Endothelial cell of umbilical vein (primary cell): ENCODE measurements at regions of chr5 and their contacts with region 1.

Region 1: DNA sequence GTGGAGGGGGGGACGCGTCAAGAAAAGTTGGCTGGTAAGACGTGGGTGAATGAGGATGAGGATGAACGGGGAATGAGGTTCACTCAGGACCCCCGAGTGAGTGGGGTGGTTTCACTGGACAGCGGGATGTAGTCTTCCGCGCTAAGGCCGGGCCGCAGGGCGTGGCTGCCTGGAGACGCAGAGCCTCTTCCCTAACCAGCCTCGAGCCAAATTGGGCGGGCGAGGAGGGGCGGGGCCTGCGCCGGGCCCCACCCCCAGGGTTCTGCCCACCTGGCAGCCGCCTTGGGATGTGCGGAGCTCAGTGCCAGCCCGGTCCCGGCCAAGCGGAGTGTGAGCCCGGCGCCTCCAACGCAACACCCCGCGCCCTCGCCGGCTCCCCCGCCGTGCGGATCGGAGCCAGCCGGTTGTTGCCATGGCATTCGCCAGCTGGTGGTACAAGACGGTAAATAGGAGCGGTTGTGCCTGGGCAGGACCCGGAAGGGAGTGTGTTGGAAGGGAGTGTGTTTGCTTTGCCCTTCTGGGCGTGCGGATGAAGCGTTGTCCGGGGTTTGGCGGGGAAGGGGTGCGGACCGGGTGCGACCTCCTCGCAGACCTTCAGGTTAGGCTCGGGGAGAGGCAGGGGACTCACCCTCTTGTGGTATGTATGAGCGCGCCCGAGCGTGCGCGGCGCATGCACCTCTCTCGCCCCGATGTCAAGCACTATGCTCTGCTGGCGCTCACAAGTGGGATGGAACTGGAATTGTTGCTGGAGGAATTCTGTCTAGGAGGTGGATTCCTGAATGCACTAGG is 743 bp downstream of the CAST start:
- DNase-seq: peak; percentile 90
- H3K4me3 ChIP-seq: peak overlapping the region; percentile 49 to 86 (median 84)
- H3K27ac ChIP-seq: peak overlapping the region; percentile 23
- H3K4me1 ChIP-seq: peaks cover 17% of the 10 kb centered on the region
- H3K27me3 ChIP-seq: no peaks in the 10 kb centered on the region
- CTCF ChIP-seq: no peak
- POLR2A ChIP-seq: peak; percentile 60

Region 2: DNA sequence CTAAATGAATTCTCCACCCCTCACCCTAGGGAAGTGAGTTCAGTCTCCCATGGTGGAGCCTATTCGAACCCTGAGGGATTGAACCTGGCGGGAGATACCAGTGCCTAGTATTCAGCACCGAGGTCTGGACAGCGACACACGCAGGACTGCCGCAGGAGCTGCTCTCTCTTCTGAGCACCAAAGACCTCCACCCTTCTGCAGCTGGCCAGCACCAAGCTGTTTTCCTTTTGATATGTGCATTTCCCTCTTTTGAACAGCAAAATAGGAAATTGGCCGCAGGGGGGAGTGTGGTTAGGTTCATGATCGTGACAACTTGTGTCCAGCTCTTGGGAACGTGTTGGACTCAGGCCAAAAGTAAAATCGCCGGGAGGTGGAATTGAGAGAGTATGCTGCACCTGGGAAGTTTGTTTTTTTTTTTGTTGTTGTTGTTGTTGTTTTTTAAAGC is 228.7 kb before region 1 on chr5:
- CTCF ChIA-PET with region 1: no interaction called
- POLR2A ChIA-PET with region 1: no interaction called
- dilution Hi-C with region 1: no loop called
- intact Hi-C with region 1: no loop called
- DNase-seq: peak; percentile 75
- H3K4me3 ChIP-seq: no peak overlapping the region
- H3K27ac ChIP-seq: no peak overlapping the region
- H3K4me1 ChIP-seq: peaks cover 22% of the 10 kb centered on the region
- H3K27me3 ChIP-seq: peaks cover 27 to 34% of the 10 kb centered on the region in 2 experiments
- CTCF ChIP-seq: peak in 1 of 2 donors; percentile 10
- POLR2A ChIP-seq: no peak

Region 3: DNA sequence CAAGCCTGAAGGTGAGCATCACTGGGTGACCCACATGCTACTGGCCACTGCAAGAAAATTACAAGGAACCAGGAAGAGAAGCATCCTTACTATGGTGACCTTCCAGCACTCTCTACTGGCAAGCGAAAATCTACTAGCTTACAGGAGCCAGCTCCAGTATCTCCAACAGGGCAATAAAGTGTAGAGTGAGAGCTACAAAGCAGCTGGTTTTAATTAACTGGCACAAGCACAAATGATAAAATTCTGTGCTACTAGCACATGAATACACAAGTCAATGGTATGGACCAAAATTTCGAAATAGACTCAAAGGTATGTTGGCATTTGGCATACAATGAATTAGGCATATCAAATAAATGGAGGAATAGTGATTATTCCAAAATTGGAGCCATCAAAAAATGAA is 114.0 kb before region 1 on chr5:
- CTCF ChIA-PET with region 1: no interaction called
- POLR2A ChIA-PET with region 1: no interaction called
- dilution Hi-C with region 1: no loop called
- intact Hi-C with region 1: no loop called
- DNase-seq: no peak
- H3K4me3 ChIP-seq: no peak overlapping the region
- H3K27ac ChIP-seq: no peak overlapping the region
- H3K4me1 ChIP-seq: no peaks in the 10 kb centered on the region
- H3K27me3 ChIP-seq: no peaks in the 10 kb centered on the region
- CTCF ChIP-seq: no peak
- POLR2A ChIP-seq: no peak

Region 4: DNA sequence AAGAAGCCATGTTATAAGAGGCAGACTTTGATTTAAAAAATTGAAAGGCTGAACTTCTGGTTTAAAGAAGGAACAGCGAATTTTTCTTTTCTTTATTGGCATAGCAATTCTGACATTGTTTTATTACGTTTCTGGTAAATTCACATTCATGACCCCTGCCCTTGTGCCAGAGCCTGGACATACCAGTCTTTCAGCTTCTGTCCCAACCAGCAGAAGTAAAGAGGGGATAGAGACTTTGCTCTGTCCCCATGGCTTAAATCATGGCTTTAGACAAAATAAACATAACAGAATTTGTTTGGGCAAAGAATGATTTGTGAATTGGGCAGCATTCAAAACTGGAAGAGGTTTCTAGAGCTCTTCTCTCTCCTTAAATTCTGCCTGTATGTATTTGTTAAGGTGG is 14.6 kb after region 1 on chr5:
- CTCF ChIA-PET with region 1: no interaction called
- POLR2A ChIA-PET with region 1: no interaction called
- dilution Hi-C with region 1: no loop called
- intact Hi-C with region 1: no loop called
- DNase-seq: no peak
- H3K4me3 ChIP-seq: no peak overlapping the region
- H3K27ac ChIP-seq: no peak overlapping the region
- H3K4me1 ChIP-seq: no peaks in the 10 kb centered on the region
- H3K27me3 ChIP-seq: no peaks in the 10 kb centered on the region
- CTCF ChIP-seq: no peak
- POLR2A ChIP-seq: no peak

Region 5: GRCh38 chr5:96702503-96703383 is 39.8 kb after region 1 on chr5:
- CTCF ChIA-PET with region 1: interaction called, 4 read pairs
- POLR2A ChIA-PET with region 1: no interaction called
- dilution Hi-C with region 1: no loop called
- intact Hi-C with region 1: loop called (anchors 1 kb)
- DNase-seq: peak; percentile 90
- H3K4me3 ChIP-seq: peak overlapping the region; percentile 21 to 63 (median 52)
- H3K27ac ChIP-seq: peak overlapping the region; percentile 78
- H3K4me1 ChIP-seq: peaks cover 20% of the 10 kb centered on the region
- H3K27me3 ChIP-seq: no peaks in the 10 kb centered on the region
- CTCF ChIP-seq: no peak
- POLR2A ChIP-seq: peak; percentile 80

Region 6: DNA sequence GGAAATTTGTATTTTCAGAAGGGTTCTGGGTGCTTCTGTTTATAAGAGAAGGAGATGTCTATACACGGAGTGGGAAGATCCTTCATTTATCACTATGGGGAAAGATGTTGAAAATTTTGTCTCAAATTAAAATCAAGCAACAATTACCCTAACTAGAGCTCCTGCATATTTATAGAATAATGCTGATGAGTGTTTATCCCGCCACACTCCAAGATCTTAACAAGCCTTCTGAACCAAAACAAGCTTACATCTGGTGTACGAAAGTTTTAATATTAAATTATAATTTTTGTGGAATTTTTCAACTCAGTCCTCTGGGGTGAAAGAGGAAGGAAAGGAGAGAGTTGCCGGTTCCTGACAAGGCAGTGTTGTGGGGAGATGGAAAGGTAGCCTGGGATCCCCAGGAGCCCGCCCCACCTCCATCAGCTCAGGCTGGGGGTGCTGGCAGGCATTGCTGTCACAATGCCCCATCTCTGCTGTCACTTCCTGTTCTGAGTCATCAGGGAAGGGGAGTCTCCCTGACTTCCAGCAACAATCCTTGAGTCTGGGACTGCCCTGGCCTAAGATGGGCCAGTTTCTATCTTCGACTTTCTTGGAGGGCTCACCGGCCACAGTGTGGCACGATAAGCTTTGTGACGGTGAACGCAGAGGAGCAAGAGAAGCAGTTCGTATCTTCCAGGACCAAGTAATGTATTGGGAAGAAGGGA is 80.3 kb after region 1 on chr5:
- CTCF ChIA-PET with region 1: no interaction called
- POLR2A ChIA-PET with region 1: no interaction called
- dilution Hi-C with region 1: no loop called
- intact Hi-C with region 1: loop called (anchors 5 kb)
- DNase-seq: peak; percentile 71
- H3K4me3 ChIP-seq: no peak overlapping the region
- H3K27ac ChIP-seq: peak overlapping the region; percentile 82
- H3K4me1 ChIP-seq: peaks cover 23% of the 10 kb centered on the region
- H3K27me3 ChIP-seq: no peaks in the 10 kb centered on the region
- CTCF ChIP-seq: no peak
- POLR2A ChIP-seq: no peak